OCI-LY7 (cell line): ENCODE measurements at regions of chr6 and their contacts with region 1.

Region 1: DNA sequence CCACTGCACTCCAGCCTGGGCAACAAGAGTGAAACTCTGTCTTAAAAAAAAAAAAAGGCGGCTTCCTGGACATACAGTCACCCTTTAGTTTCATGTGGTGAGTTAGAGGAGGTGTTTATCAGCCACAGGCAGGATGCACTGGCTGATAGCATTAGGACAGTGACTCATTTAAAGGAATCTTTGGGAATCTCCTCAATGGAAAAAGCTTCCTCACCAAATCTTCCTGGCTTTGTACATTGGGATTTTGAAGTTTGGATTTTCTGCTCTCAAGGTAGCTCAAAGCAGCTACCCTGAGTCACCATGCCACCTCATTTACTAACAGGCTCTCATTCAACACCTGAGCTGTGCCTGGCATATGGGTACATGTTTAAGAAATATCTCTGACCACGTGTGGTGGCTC is 20.2 kb downstream of the PRPH2 start:
- DNase-seq: no peak
- H3K4me3 ChIP-seq: no peak overlapping the region
- H3K27ac ChIP-seq: no peak overlapping the region
- H3K4me1 ChIP-seq: no peaks in the 10 kb centered on the region
- CTCF ChIP-seq: no peak

Region 2: DNA sequence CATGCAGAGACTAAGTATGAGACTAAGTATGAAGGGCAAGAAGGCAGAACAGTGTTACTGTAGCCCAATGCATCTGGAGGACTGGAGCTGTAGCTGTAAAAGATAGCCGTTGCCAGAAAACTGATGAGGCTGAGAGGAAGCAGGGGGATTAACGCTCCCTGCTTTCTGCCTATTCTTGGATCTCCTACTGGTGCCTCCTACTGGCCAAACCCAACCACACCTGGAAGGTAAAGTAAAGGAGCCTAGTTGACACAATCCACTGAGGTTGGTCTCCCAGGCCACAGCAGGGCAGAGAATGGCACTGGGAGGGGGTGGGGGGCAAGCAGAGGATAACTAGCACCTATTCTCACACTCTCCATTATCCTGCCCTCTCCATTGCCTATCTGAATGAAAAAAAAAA is 379.5 kb before region 1 on chr6:
- CTCF ChIA-PET with region 1: no interaction called
- POLR2A ChIA-PET with region 1: no interaction called
- intact Hi-C with region 1: no loop called
- DNase-seq: no peak
- H3K4me3 ChIP-seq: no peak overlapping the region
- H3K27ac ChIP-seq: no peak overlapping the region
- H3K4me1 ChIP-seq: no peaks in the 10 kb centered on the region
- CTCF ChIP-seq: 0 out of 2 replicates have a peak, but pooled peaks have one; percentile 34

Region 3: GRCh38 chr6:42714098-42714761 is 12.0 kb after region 1 on chr6:
- CTCF ChIA-PET with region 1: no interaction called
- POLR2A ChIA-PET with region 1: interaction called, 10 read pairs
- intact Hi-C with region 1: no loop called
- DNase-seq: no peak
- H3K4me3 ChIP-seq: no peak overlapping the region
- H3K27ac ChIP-seq: no peak overlapping the region
- H3K4me1 ChIP-seq: no peaks in the 10 kb centered on the region
- CTCF ChIP-seq: no peak